ENCODE measurements at regions of chr19 and their contacts with region 1.

Region 1: GRCh38 chr19:14505488-14506432 is 9.8 kb upstream of the GIPC1 start:
- DNase-seq: peak; percentile 92
- H3K4me3 Mint-ChIP-seq: peak overlapping the region; percentile 28
- H3K27ac Mint-ChIP-seq: peak overlapping the region; percentile 88
- H3K4me1 Mint-ChIP-seq: peaks cover 38% of the 10 kb centered on the region
- H3K27me3 Mint-ChIP-seq: peaks cover 8% of the 10 kb centered on the region

Region 2: DNA sequence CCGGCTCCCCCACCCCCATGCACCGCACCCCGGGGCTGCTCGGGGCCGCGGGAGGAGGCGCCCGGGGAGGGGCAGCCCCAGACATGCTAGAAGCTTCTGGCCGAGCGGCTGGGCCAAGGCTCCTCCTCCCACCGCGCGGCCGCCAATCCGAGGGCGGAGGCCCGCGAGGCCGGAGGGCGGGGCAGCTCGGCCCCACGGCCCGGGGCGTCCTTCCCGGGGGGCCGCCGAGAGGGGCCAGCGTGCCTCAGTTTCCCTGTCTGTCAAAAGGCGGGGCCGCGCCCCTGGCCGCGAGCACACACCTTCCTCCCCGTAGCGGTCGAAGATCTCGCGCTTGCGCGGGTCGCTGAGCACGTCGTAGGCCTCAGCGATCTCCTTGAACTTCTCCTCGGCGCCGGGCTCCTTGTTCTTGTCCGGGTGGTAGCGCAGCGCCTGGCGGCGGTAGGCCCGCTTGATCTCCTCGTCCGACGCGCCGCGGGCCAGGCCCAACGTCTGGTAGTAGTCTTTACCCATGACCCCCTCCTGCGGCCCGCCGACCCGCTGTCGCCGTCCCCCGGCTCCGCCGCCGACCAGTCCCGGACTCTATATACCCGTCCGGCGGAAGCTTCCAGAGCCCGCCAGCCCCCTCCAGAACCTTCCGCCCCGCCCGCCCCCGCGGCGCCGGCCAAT is 12.2 kb after region 1 on chr19 and contains the start of gene DNAJB1:
- intact Hi-C with region 1: loop called (anchors 1 kb)
- DNase-seq: peak; percentile 94
- H3K4me3 Mint-ChIP-seq: peak within 1 kb of the TSS; percentile 90
- H3K27ac Mint-ChIP-seq: peak within 1 kb of the TSS; percentile 96
- H3K4me1 Mint-ChIP-seq: peaks cover 60% of the 10 kb centered on the region
- H3K27me3 Mint-ChIP-seq: no peaks in the 10 kb centered on the region
- total RNA-seq, gene DNAJB1: 117 and 126 TPM in 2 replicates

Region 3: DNA sequence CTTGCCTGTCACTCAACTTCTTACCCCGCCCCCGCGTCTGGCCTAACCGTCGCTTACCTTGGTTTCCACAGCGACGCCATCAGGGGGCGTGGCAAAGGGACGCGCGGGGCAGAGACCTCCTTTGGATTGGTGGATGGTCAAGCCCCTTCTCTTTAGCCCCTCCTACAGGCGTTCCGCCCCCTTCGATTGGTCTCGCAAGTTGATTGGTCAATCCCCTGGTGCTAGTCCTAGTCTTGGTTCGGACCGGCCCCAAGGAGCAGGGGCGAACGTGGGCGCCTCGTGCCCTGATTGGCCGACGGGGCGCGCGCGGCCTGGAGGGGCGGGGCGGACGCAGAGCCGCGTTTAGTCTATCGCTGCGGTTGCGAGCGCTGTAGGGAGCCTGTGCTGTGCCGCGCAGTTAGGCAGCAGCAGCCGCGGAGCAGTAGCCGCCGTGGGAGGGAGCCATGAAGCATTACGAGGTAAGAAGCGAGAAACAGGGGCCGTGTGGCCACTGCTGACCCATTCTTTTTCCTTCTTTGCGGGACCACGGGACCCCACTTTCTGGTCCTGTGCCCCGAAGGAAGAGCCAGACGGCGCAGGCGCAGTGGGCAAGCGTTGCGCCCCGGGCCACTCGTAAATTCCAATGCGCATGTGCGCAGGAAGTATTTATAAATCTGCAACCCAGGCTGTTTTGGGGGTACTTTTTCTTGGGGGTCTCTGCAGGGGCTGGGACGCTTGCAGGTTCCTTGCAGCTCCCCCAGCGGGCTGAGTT is 23.7 kb after region 1 on chr19 and contains the start of gene TECR:
- intact Hi-C with region 1: no loop called
- DNase-seq: peak; percentile 100
- H3K4me3 Mint-ChIP-seq: peak within 1 kb of the TSS; percentile 90
- H3K27ac Mint-ChIP-seq: peak within 1 kb of the TSS; percentile 94
- H3K4me1 Mint-ChIP-seq: peaks cover 14% of the 10 kb centered on the region
- H3K27me3 Mint-ChIP-seq: no peaks in the 10 kb centered on the region
- total RNA-seq, gene TECR: 108 and 119 TPM in 2 replicates